Left cardiac atrium (tissue), 4 donors: ENCODE measurements at regions of chr1 and their contacts with region 1.

Region 1: DNA sequence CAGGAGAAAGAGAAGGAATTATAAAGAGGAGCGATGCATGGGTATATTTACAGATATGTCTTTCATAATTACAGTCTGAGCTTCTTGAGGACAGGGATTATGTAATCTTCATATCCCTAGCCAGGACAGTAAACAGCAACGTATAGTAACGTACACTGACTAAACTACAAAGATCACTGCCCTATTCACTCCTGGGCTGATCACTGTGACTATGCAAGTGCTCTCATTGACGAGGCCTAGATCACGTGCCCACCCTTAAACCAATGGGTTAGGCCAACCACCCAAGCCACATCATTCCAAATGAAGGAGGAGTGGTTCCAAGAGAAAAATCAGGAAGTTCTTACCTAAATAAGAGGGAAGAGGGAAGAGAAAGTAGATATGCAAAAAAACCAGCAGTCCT is 18.5 kb downstream of the PIK3R3 start:
- DNase-seq: no peak
- ATAC-seq: no peak

Region 2: DNA sequence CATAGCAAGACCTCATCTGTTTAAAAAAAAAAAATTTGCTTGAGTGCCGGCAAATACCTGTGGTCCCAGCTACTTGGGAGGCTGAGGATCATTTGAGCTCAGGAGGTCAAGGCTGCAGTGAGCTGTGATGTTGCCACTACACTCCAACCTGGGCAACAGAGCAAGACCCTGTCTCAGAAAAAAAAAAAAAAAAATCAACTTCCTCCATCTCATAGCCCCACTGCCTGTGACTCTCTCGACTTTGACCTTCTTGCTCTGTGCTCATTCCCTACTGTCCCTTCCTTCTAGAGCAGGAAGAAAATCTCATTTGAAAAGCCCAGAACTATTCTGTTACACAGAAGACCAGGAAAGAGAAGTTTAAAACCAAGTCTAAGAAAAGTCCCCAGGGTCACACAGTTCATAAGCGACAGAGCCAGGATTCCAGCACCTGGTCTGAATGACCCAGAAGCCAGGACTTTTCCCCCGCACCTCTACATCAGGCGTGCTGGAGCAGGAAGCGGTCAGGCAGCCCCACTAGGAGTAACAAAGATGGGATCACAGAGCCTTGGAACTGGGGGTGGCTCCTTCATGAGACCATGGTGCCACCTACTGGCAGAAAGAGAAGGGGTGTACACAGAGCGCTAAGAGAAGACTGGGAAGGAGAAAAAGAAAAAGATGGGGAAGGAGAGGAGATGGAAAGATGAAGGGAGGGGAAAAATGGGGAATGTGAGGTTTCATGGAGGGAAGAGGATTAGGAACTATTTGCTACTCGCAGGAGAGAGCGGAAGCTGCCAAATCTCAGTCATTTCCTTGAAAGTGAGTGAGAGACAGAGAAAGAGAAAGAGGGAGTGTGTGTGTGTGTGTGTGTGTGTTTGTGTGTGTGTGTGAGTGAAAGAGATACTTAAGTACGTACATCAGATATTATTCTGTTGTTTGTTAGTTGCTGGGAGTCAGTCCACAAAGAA is 65.5 kb after region 1 on chr1:
- intact Hi-C with region 1: loop called in 1 of 2 experiments (anchors 10 kb)
- DNase-seq: peak; percentile 82
- ATAC-seq: peak; percentile 83 to 87

Region 3: DNA sequence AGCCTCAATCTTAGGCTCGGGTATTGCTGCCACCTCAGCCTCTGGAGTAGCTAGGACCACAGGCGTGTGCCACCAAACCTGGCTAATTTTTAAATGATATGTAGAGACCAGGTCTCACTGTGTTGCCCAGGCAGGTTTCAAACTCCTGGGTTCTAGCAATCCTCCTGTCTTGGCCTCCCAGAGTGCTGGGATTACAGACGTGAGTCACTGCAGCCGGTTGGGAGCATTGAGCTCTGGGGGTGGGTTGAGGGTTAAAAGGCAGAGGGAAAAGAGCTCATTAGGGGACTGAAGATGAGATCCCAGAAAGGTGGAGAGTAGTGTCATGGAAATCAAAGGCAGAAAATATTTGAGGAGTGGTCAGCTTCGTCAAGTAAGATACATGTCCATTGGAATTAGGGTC is 140.7 kb after region 1 on chr1:
- intact Hi-C with region 1: no loop called
- DNase-seq: no peak
- ATAC-seq: no peak